MCF 10A (cell line): ENCODE measurements at regions of chr4 and their contacts with region 1.

Region 1: DNA sequence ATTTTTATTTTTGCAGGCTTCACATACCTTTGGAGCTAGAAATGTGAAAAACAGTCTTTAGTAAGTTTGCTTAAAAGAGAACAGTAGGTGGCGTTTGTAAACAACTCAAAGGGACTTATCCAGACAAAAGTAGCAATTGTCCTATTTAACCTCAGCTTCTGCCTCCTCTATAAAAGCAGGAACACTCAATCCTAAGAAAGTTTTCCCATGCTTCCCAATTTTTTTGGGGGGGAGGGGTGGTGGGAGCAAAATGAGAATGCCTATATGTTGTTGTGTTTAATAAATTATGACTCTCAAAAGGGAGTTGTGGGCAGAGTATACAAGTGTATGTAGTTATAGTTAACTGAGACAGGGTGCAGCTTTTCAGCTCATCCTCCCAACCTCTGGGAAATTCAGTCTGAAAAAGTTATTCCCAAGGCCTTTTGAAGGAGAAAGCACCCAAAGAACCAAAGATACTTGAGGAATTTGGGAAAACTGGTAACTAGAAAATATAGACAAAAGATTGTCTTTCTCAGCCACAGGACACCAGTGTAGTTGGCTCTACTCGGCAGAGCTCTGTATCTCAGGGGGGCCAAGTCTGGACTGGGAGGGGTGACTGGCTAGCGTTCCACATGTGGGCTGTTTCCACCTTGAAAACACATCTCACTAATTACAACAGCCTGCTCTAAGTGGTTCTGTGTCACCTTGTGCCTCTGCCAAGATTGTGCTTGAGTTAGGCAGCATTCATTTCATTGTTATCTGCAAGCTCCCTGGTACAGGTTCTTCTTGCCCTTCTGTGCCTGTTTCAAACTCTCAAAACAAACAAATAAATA is 2.8 kb downstream of the SFRP2 start:
- DNase-seq: peak; percentile 49
- H3K4me3 Mint-ChIP-seq: no peak overlapping the region
- H3K27ac Mint-ChIP-seq: no peak overlapping the region
- H3K4me1 Mint-ChIP-seq: peaks cover 13% of the 10 kb centered on the region
- H3K27me3 Mint-ChIP-seq: no peaks in the 10 kb centered on the region
- CTCF ChIP-seq: peak; percentile 47

Region 2: GRCh38 chr4:153962311-153963039 is 176.4 kb after region 1 on chr4:
- CTCF ChIA-PET with region 1: no interaction called
- POLR2A ChIA-PET with region 1: no interaction called
- intact Hi-C with region 1: no loop called
- DNase-seq: no peak
- H3K4me3 Mint-ChIP-seq: no peak overlapping the region
- H3K27ac Mint-ChIP-seq: no peak overlapping the region
- H3K4me1 Mint-ChIP-seq: no peaks in the 10 kb centered on the region
- H3K27me3 Mint-ChIP-seq: no peaks in the 10 kb centered on the region
- CTCF ChIP-seq: no peak

Region 3: GRCh38 chr4:154349829-154350228 is 563.7 kb after region 1 on chr4:
- CTCF ChIA-PET with region 1: interaction called, 23 read pairs
- POLR2A ChIA-PET with region 1: no interaction called
- intact Hi-C with region 1: loop called (anchors 1 kb)
- DNase-seq: peak; percentile 33
- H3K4me3 Mint-ChIP-seq: no peak overlapping the region
- H3K27ac Mint-ChIP-seq: no peak overlapping the region
- H3K4me1 Mint-ChIP-seq: no peaks in the 10 kb centered on the region
- H3K27me3 Mint-ChIP-seq: no peaks in the 10 kb centered on the region
- CTCF ChIP-seq: peak; percentile 51